MCF 10A (cell line): ENCODE measurements at regions of chr13 and their contacts with region 1.

Region 1: DNA sequence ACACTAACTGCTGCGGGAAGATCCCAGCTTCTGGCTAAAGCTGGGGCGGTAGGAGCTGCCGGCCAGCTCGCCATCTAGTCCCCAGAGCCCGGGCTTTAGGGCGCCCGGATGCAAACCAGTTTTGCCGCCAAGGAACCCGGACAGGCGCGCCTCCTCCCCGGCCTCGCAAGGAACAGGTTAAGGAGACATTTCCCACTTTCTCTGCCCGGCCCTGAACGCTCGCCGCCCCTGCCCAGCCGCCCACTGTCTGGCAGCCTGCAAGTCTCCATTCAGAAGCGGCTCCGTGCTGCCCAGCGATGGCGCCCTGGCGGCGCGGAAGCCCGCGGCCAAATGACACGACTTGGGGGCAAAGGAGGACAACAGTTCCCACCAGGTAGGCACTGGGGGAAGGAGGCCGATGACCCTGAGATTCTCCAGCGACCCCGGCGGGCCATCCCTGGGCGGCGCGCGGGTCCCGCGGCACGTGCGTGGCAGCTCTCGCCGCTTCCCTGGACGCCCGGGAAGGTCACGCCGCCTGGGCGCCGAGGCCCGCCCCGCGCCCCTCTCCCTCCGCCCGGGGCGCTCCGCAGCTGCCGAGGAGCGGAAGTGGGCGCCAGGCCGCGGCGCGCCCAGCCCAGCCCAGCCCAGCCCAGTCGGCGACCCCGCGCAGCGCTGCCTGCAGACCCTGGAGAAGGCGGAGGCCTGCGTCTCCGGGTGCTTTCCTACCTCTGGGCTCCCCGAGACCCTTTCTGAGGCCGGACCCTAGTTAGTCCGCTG is 42.2 kb upstream of the HNRNPA1L2 start:
- DNase-seq: peak; percentile 44
- H3K4me3 Mint-ChIP-seq: peak overlapping the region; percentile 78
- H3K27ac Mint-ChIP-seq: peak overlapping the region; percentile 96
- H3K4me1 Mint-ChIP-seq: peaks cover 17% of the 10 kb centered on the region
- H3K27me3 Mint-ChIP-seq: no peaks in the 10 kb centered on the region
- CTCF ChIP-seq: no peak

Region 2: GRCh38 chr13:53191091-53191490 is 591.1 kb after region 1 on chr13:
- CTCF ChIA-PET with region 1: no interaction called
- POLR2A ChIA-PET with region 1: no interaction called
- intact Hi-C with region 1: loop called (anchors 10 kb)
- DNase-seq: peak; percentile 83
- H3K4me3 Mint-ChIP-seq: no peak overlapping the region
- H3K27ac Mint-ChIP-seq: no peak overlapping the region
- H3K4me1 Mint-ChIP-seq: peaks cover 13% of the 10 kb centered on the region
- H3K27me3 Mint-ChIP-seq: no peaks in the 10 kb centered on the region
- CTCF ChIP-seq: no peak